ENCODE measurements at regions of chrX and their contacts with region 1.

Region 1: GRCh38 chrX:137194164-137194563 is 160.4 kb upstream of the GPR101 start:
- DNase-seq: no peak
- H3K4me3 ChIP-seq: no peak overlapping the region
- H3K27ac ChIP-seq: no peak overlapping the region
- H3K4me1 ChIP-seq: peaks cover 0 to 4% (median 0%) of the 10 kb centered on the region in 3 donors
- H3K27me3 ChIP-seq: no peaks in the 10 kb centered on the region
- CTCF ChIP-seq: peak in 2 of 6 experiments; percentile 32 to 50
- POLR2A ChIP-seq: no peak

Region 2: GRCh38 chrX:136953867-136954787 is 240.0 kb before region 1 on chrX:
- intact Hi-C with region 1: loop called (anchors 10 kb)
- DNase-seq: peak; percentile 1
- H3K4me3 ChIP-seq: no peak overlapping the region
- H3K27ac ChIP-seq: no peak overlapping the region
- H3K4me1 ChIP-seq: peaks cover 0 to 5% (median 0%) of the 10 kb centered on the region in 3 donors
- H3K27me3 ChIP-seq: no peaks in the 10 kb centered on the region
- CTCF ChIP-seq: peak in 5 of 6 experiments; percentile 23 to 49 (median 39)
- POLR2A ChIP-seq: no peak

Region 3: GRCh38 chrX:137479386-137479785 is 285.2 kb after region 1 on chrX:
- intact Hi-C with region 1: no loop called
- DNase-seq: no peak
- H3K4me3 ChIP-seq: no peak overlapping the region
- H3K27ac ChIP-seq: no peak overlapping the region
- H3K4me1 ChIP-seq: no peaks in the 10 kb centered on the region
- H3K27me3 ChIP-seq: no peaks in the 10 kb centered on the region
- CTCF ChIP-seq: no peak
- POLR2A ChIP-seq: no peak

Region 4: GRCh38 chrX:138057883-138058282 is 863.7 kb after region 1 on chrX:
- intact Hi-C with region 1: no loop called
- DNase-seq: no peak
- H3K4me3 ChIP-seq: no peak overlapping the region
- H3K27ac ChIP-seq: no peak overlapping the region
- H3K4me1 ChIP-seq: no peaks in the 10 kb centered on the region
- H3K27me3 ChIP-seq: no peaks in the 10 kb centered on the region
- CTCF ChIP-seq: no peak
- POLR2A ChIP-seq: no peak